ENCODE measurements at regions of chr6 and their contacts with region 1.

Region 1: DNA sequence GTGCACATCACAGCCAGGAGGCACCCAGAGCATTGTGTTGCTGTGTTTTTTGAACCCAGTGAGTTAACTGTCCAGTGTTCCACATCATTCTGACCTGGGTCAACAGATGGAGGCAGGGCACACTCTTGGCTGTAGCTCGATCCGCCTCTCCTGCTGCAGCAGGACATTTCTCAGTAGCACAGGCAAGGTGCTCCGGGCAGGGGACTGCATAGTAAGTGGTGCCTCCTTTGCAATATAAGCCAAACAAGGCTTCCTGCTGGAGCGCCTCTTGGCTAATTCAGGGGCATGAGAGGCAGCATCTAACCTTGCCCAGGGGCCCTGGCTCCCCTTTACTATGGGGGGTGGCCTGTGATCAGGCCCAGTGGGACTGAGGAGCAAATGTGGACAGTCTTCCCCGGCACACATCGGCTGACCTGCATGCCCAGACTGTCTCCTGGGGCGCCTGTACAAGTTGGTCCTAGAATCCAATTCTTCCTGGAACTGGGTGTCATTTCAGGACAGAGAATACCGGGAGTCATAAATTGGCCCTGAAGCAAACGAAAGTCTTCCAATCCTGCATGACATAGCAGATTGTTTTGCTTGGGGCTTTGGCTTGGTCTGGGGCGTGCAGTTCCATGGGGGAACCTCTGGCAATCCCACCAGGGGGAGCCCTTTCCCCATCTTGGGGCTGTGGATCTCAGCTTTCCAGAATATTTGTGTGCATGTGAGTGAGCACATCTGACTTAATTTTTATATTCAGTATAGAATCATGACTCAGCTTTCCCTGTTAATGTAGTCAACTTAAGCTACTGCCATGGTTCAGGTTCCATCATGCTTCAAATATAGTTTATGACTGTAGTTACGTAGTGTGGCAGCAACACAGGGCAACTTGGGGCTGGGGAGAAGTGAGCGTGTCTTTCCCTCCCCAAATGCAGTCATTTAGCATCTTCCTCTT is 56.0 kb upstream of the DDR1 start:
- DNase-seq: peak; percentile 87 to 92
- ATAC-seq: peak; percentile 92 to 96 (median 94)
- H3K4me3 ChIP-seq: peak overlapping the region in 5 of 10 donors; percentile 17 to 41 (median 23)
- H3K27ac ChIP-seq: peak overlapping the region in 9 of 10 donors; percentile 33 to 91 (median 78)
- H3K4me1 ChIP-seq: peaks cover 3 to 49% (median 15%) of the 10 kb centered on the region in 9 donors
- H3K27me3 ChIP-seq: no peaks in the 10 kb centered on the region
- CTCF ChIP-seq: peak; percentile 89 to 97 (median 94)

Region 2: GRCh38 chr6:30730601-30731435 is 97.5 kb before region 1 on chr6:
- intact Hi-C with region 1: loop called in 1 of 10 experiments (anchors 10 kb)
- DNase-seq: peak; percentile 70 to 71
- ATAC-seq: peak; percentile 56 to 83 (median 81)
- H3K4me3 ChIP-seq: no peak overlapping the region
- H3K27ac ChIP-seq: peak overlapping the region in 5 of 10 donors; percentile 7 to 64 (median 10)
- H3K4me1 ChIP-seq: peaks cover 6 to 27% (median 16%) of the 10 kb centered on the region in 9 donors
- H3K27me3 ChIP-seq: no peaks in the 10 kb centered on the region
- CTCF ChIP-seq: peak; percentile 41 to 72 (median 63)

Region 3: DNA sequence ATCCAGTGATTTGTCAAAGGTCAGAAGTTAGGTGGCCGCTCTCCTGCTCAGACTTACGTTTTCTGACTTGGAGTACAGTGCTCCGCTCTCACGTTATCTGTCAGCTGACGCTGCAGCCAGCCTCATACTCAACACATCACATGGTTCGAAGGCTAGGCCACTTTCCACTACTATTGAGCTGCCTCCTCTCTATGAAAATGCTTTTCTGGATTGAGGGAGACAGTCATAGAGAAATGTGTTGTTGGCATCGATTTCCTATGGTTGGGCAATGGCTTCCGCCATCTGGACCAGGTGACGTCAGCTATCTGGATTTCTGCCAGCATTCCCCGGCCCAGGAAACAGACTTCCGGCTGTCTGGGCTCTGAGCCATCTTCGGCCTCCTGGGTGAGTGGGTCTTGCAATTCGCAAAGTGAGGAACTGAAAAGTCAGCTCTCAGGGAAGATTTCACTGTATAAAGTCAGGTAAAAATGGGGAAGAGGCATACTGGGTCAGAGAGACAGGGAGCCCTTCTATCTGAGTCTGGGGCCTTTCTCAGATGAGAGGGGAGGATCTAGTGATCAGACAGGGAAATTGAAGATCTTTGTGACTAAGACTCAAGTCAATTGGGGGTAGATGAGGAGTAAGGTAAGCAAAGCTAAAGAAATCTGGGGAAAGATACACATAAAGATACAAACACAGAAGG is 46.4 kb before region 1 on chr6:
- intact Hi-C with region 1: loop called in 1 of 10 experiments (anchors 5 kb)
- DNase-seq: peak; percentile 93 to 97
- ATAC-seq: peak; percentile 89 to 92 (median 91)
- H3K4me3 ChIP-seq: peak overlapping the region in 6 of 10 donors; percentile 2 to 33 (median 20)
- H3K27ac ChIP-seq: peak overlapping the region; percentile 74 to 97 (median 94)
- H3K4me1 ChIP-seq: peaks cover 25 to 100% (median 51%) of the 10 kb centered on the region in 9 donors
- H3K27me3 ChIP-seq: no peaks in the 10 kb centered on the region
- CTCF ChIP-seq: no peak

Region 4: GRCh38 chr6:30883685-30884520 is 55.6 kb after region 1 on chr6 and contains the start of gene DDR1:
- intact Hi-C with region 1: loop called in 3 of 10 experiments (anchors 5 kb)
- DNase-seq: peak; percentile 73 to 76
- ATAC-seq: peak; percentile 63 to 89 (median 73)
- H3K4me3 ChIP-seq: peak within 1 kb of the TSS; percentile 53 to 96 (median 74)
- H3K27ac ChIP-seq: peak within 1 kb of the TSS; percentile 43 to 90 (median 84)
- H3K4me1 ChIP-seq: peaks cover 13 to 58% (median 36%) of the 10 kb centered on the region in 9 donors
- H3K27me3 ChIP-seq: peaks cover 0 to 22% (median 0%) of the 10 kb centered on the region in 7 donors
- CTCF ChIP-seq: no peak
- total RNA-seq, gene DDR1: 15.5 to 49.2 (median 26.9) TPM

Region 5: DNA sequence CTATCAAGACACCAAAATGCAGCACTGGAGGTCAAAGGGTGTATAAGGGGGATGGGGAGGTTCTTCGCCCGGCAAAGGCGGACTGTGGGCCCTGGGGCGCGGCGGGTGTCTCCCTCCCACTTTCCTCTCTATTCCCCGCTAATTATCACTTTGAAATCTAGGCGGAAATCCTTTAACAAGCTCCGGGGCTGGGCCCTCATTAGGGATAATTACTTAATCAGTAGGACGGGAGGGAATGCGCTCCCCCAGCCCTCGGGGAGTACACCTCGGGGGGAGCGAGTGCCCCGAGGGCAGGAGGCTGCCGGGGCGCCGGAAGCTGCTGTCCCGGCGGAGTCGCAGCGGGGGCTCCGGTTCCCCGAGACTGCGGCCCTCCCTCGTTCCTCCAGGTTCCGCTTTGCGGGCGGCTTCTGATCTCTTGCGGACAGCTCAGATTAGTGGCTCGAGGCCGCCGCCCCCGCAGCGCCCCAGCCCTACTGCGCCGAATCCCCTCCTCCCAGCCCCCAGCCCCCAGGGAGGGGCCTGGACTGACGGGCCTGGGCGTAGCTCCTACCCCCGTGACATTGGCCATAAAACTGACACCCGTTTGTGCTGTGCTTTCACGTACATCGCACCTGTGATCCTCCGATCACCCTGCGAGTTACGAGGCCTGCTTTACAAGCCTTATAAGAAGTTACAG is 127.2 kb after region 1 on chr6:
- intact Hi-C with region 1: no loop called
- DNase-seq: peak; percentile 58 to 62
- ATAC-seq: peak; percentile 79 to 94 (median 88)
- H3K4me3 ChIP-seq: peak overlapping the region; percentile 25 to 60 (median 50)
- H3K27ac ChIP-seq: peak overlapping the region in 7 of 10 donors; percentile 10 to 47 (median 39)
- H3K4me1 ChIP-seq: peaks cover 0 to 18% (median 14%) of the 10 kb centered on the region in 9 donors
- H3K27me3 ChIP-seq: peaks cover 0 to 85% (median 5%) of the 10 kb centered on the region in 7 donors
- CTCF ChIP-seq: no peak

Region 6: GRCh38 chr6:31079656-31080261 is 251.5 kb after region 1 on chr6:
- intact Hi-C with region 1: loop called in 7 of 10 experiments (anchors 5 kb)
- DNase-seq: peak; percentile 40 to 63
- ATAC-seq: peak in 7 of 8 donors; percentile 63 to 83 (median 67)
- H3K4me3 ChIP-seq: peak overlapping the region in 6 of 10 donors; percentile 1 to 37 (median 34)
- H3K27ac ChIP-seq: no peak overlapping the region
- H3K4me1 ChIP-seq: peaks cover 0 to 12% (median 4%) of the 10 kb centered on the region in 9 donors
- H3K27me3 ChIP-seq: no peaks in the 10 kb centered on the region
- CTCF ChIP-seq: peak; percentile 56 to 90 (median 78)

Measured in heart right ventricle (tissue), 16 donors.